ENCODE measurements at regions of chr4 and their contacts with region 1.

Region 1: GRCh38 chr4:79576429-79576753 is 168.4 kb upstream of the GK2 start:
- DNase-seq: no peak
- ATAC-seq: peak; percentile 49 to 70

Region 2: GRCh38 chr4:79042079-79042674 is 534.2 kb before region 1 on chr4:
- intact Hi-C with region 1: loop called in 1 of 2 experiments (anchors 2 kb)
- DNase-seq: no peak
- ATAC-seq: peak in 1 of 2 donors; percentile 57

Region 3: GRCh38 chr4:79421483-79421882 is 154.9 kb before region 1 on chr4:
- intact Hi-C with region 1: no loop called
- DNase-seq: no peak
- ATAC-seq: no peak

Measured in left cardiac atrium (tissue), 4 donors.